ENCODE measurements at regions of chr19 and their contacts with region 1.

Region 1: DNA sequence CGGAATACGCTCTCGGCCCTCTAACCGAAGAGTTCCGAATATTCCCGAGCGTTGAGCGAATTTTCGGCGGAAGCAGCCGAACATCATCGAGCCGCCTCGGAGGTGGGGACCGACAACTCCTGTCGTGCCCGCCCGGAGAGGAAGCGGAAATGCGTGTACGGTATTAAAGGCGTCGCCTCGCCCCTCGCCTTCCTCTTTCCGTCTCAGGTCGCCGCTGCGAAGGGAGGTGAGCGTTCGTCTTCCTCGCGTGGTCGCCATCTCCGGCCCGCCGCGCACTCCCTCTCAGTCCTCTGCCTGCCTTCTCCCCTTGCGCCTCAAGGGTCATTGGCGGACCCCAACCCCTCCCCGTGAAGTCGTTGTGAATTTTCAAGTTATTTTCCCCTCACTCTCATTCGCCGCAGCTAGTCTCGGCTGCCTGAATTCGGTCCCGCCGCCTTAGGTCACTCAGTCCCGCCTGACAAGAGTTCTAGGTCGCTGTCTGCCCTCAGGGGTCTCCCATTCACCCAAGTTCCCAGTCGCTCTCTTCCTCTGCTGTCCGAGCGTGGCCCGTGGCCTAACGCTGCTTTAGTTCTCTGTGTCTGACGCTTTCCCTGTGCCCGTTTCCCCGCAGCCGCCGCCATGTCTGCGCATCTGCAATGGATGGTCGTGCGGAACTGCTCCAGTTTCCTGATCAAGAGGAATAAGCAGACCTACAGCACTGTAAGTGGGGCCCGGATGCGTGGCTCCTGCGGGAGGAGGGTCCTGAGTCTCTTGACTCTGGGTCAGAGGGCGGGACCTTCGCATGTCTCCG is at the start of gene RPL28:
- DNase-seq: peak; percentile 96
- H3K4me3 ChIP-seq: peak within 1 kb of the TSS; percentile 74 to 98 (median 81)
- H3K27ac ChIP-seq: peak within 1 kb of the TSS; percentile 89
- H3K4me1 ChIP-seq: peaks cover 32% of the 10 kb centered on the region
- H3K27me3 ChIP-seq: no peaks in the 10 kb centered on the region
- CTCF ChIP-seq: no peak
- total RNA-seq, gene RPL28: 279 to 1,713 TPM

Region 2: GRCh38 chr19:55279770-55280643 is 105.9 kb before region 1 on chr19 and contains the start of gene HSPBP1:
- CTCF ChIA-PET with region 1: interaction called, 12 read pairs
- dilution Hi-C with region 1: no loop called
- in situ Hi-C with region 1: no loop called
- intact Hi-C with region 1: no loop called
- DNase-seq: peak; percentile 97
- H3K4me3 ChIP-seq: peak within 1 kb of the TSS; percentile 62 to 94 (median 69)
- H3K27ac ChIP-seq: peak within 1 kb of the TSS; percentile 81
- H3K4me1 ChIP-seq: peaks cover 5% of the 10 kb centered on the region
- H3K27me3 ChIP-seq: no peaks in the 10 kb centered on the region
- CTCF ChIP-seq: no peak
- total RNA-seq, gene HSPBP1: 27.5 to 42.9 TPM

Region 3: DNA sequence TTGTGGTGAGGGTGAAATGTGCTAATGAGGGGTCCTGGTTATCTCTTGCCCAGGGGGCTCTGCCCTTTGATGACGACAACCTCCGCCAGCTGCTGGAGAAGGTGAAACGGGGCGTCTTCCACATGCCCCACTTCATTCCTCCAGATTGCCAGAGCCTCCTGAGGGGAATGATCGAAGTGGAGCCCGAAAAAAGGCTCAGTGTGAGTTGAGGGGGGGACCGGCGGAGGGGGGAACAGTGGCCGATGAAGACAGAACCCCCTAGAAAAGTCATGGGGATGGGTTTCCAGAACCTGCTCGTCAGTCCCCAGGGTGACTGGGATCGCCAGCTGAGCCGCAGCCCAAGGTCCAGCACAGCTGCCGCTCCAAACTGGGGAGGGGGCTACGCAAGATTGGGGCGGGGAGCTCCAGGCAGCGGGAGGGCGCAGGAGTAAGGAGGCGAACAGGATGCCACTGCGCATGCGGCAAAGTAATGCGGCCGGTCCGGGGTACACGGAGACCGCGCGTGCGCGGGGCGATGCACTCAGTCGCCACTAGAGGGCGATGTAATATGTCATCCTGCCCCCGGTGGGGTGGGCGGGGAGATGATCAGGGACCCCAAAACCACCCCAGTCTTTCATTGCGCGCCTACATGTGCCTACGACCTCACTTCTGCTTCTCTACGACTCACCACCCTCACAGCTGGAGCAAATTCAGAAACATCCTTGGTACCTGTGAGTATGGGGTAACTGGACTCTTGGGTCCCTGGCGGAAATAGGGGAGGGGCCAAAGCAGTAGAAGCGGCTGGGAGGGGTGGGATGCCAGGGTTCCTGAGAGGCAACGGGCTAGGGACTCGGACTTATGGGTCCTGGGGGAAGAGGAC is 84.2 kb before region 1 on chr19:
- CTCF ChIA-PET with region 1: no interaction called
- dilution Hi-C with region 1: loop called (anchors 5 kb)
- in situ Hi-C with region 1: loop called (anchors 10 kb)
- intact Hi-C with region 1: loop called (anchors 2 kb)
- DNase-seq: peak; percentile 52
- H3K4me3 ChIP-seq: peak overlapping the region; percentile 17 to 50 (median 29)
- H3K27ac ChIP-seq: no peak overlapping the region
- H3K4me1 ChIP-seq: no peaks in the 10 kb centered on the region
- H3K27me3 ChIP-seq: no peaks in the 10 kb centered on the region
- CTCF ChIP-seq: peak; percentile 73 to 94

Region 4: DNA sequence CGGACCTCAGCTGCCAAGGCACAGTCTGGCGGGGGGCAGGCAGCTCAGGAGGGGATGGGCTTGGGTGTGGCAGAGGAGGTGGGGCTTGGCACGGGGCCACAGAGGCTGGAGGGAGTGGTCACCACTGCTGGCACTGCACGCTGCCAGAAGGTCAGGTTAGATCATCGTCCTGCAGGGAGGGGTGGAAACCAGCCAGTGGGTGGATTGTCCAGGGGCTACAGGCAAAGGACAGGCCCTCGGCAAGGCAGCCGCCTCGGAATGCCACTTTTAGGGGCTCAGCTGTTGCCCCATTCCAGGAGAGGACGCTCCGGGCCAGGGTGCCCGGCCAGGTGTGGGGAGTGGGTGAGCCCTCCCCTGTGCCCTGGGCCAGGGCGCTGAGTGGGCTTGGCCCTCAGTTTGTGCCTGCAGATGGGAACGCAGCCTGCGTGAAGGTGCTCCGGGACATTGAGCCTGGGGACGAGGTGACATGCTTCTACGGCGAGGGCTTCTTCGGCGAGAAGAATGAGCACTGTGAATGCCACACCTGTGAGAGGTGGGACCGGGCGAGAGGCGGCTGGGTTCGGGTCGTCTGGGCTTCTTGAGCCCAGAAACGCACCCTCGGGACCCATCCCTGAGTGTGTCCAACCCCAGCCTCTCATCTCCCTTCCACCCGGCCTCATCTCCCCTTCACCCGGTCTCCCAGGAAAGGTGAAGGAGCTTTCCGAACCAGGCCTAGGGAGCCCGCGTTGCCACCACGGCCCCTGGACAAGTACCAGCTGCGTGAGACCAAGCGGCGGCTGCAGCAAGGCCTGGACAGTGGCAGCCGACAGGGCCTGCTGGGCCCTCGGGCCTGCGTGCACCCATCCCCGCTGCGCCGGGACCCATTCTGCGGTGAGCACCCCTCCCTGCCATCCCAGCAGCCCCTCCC is 39.9 kb before region 1 on chr19:
- CTCF ChIA-PET with region 1: interaction called, 6 read pairs
- dilution Hi-C with region 1: loop called (anchors 5 kb)
- in situ Hi-C with region 1: no loop called
- intact Hi-C with region 1: no loop called
- DNase-seq: no peak
- H3K4me3 ChIP-seq: no peak overlapping the region
- H3K27ac ChIP-seq: no peak overlapping the region
- H3K4me1 ChIP-seq: peaks cover 39% of the 10 kb centered on the region
- H3K27me3 ChIP-seq: no peaks in the 10 kb centered on the region
- CTCF ChIP-seq: no peak

Region 5: DNA sequence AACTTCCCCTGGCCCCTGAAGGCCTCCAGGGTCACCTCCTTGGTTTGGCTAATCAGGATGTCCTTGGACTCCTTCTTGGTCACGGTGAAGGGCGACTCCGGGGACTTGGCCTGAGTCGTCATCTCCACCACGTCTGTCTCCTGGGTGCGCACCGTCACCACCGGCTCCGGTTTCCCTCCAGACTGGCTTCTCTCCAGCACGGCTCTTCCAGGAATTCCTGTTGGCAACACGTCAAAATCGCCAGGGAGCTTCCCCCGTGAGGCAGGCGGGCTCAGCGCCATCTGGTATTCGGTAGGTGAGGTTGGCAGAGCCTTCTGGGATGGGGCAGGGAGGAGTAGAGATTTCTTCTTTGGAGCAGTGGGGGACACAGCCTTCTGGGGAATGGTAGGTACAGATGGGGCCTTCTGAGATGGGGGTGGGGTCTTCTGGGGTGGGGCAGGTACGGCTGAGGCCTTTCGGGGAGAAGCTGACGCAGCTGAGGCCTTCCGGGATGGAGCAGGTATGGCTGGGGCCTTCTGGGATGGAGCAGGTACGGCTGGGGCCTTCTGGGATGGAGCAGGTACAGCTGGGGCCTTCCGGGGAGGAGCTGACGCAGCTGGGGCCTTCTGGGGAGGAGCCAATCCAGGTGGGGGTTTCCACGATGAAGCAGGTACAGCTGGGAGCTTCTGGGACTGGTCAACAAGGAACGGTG is 26.8 kb before region 1 on chr19:
- CTCF ChIA-PET with region 1: no interaction called
- dilution Hi-C with region 1: no loop called
- in situ Hi-C with region 1: no loop called
- intact Hi-C with region 1: no loop called
- DNase-seq: no peak
- H3K4me3 ChIP-seq: no peak overlapping the region
- H3K27ac ChIP-seq: no peak overlapping the region
- H3K4me1 ChIP-seq: peaks cover 14% of the 10 kb centered on the region
- H3K27me3 ChIP-seq: no peaks in the 10 kb centered on the region
- CTCF ChIP-seq: no peak

Region 6: DNA sequence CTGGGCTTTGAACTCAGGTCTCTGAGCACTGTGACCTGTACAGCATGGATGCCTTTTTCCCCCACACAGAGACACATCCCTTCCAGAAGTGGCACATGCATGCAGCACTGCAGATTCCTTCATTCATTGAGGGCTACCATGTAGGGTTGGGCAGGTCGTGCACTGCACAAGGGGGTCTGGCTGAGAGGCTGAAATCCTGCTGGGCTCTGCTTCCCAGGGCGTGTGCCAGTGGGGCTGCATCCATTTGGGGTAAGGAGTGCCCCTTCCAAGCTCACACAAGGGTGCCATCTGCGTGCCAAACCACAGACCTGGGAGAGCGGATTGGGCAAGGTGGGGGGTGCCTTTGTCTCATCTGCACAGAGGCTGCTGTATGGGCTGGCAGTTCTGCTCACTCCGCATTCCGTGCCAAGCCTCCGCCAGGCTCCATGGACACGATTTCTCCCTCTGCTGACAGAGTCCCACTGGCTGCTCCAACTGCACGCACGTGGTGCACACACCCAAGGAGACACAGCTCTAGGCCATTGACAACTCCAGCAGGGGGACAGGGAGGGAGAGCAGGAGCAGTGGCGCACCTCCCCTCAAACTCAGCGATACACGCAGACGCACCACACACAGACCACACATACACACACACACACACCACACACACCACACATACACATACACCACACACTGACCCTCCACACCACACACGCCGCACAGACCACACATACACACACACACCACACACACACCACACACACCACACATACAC is 61.7 kb after region 1 on chr19:
- CTCF ChIA-PET with region 1: no interaction called
- dilution Hi-C with region 1: no loop called
- in situ Hi-C with region 1: no loop called
- intact Hi-C with region 1: loop called (anchors 2 kb)
- DNase-seq: peak; percentile 77
- H3K4me3 ChIP-seq: no peak overlapping the region
- H3K27ac ChIP-seq: no peak overlapping the region
- H3K4me1 ChIP-seq: peaks cover 33% of the 10 kb centered on the region
- H3K27me3 ChIP-seq: peaks cover 25% of the 10 kb centered on the region
- CTCF ChIP-seq: no peak

Region 7: GRCh38 chr19:55467236-55468053 is 81.5 kb after region 1 on chr19:
- CTCF ChIA-PET with region 1: no interaction called
- dilution Hi-C with region 1: no loop called
- in situ Hi-C with region 1: no loop called
- intact Hi-C with region 1: no loop called
- DNase-seq: peak; percentile 38
- H3K4me3 ChIP-seq: no peak overlapping the region
- H3K27ac ChIP-seq: no peak overlapping the region
- H3K4me1 ChIP-seq: no peaks in the 10 kb centered on the region
- H3K27me3 ChIP-seq: no peaks in the 10 kb centered on the region
- CTCF ChIP-seq: peak; percentile 77 to 97

Region 8: GRCh38 chr19:55526216-55527196 is 140.6 kb after region 1 on chr19:
- CTCF ChIA-PET with region 1: no interaction called
- dilution Hi-C with region 1: no loop called
- in situ Hi-C with region 1: no loop called
- intact Hi-C with region 1: no loop called
- DNase-seq: no peak
- H3K4me3 ChIP-seq: no peak overlapping the region
- H3K27ac ChIP-seq: no peak overlapping the region
- H3K4me1 ChIP-seq: no peaks in the 10 kb centered on the region
- H3K27me3 ChIP-seq: no peaks in the 10 kb centered on the region
- CTCF ChIP-seq: no peak

Measured in mammary epithelial cell (primary cell).